Activated CD8-positive, alpha-beta memory T cell treated with anti-CD3 and anti-CD28 coated beads, Interleukin-2, amount 10 ng/mL, durations not matched to agents 7 days and 5 days (primary cell): ENCODE measurements at regions of chr5 and their contacts with region 1.

Region 1: DNA sequence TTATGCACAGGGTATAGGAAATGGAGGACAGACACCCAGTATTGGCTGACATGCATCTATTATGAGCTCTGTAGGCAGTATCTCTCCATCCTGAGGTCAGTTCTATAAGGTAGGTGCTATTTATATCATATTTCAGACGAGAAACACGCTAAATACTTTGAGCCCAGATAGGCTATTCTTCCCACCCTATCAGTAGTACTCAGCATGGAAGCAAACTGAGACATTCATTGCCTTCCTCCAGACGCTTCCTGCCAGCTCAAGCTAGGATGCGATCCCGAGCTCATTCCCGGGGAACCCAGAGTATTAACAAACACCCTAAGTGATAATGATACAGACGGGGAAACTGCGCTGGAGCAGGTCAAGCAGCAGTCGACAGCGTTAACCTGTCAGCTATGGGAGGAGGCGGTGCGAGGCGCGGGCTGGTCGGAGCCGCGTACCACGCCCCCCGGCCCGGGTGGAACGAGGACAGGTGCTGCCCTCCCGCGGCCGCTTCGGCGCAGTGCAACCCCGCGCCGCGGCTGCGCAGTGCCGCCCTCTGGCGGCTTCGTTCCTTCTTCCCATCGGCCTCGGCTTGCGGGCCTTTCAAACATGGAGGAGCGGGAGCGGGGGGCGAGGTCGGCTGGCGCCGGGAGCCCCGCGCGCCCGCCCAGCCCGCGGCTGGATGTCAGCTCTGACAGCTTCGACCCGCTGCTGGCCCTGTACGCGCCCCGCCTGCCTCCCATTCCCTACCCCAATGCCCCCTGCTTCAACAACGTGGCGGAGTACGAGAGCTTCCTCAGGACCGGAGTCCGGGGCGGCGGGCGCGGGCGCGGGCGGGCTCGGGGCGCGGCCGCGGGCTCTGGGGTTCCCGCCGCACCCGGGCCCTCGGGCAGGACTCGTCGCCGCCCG is at the start of gene LSM11:
- DNase-seq: peak; percentile 92
- ATAC-seq: peak; percentile 94
- H3K4me3 Mint-ChIP-seq: peak within 1 kb of the TSS; percentile 83
- H3K27ac Mint-ChIP-seq: peak within 1 kb of the TSS; percentile 83
- H3K4me1 Mint-ChIP-seq: peaks cover 36% of the 10 kb centered on the region
- H3K27me3 Mint-ChIP-seq: no peaks in the 10 kb centered on the region
- total RNA-seq, gene LSM11: 5.5 to 7.2 TPM

Region 2: DNA sequence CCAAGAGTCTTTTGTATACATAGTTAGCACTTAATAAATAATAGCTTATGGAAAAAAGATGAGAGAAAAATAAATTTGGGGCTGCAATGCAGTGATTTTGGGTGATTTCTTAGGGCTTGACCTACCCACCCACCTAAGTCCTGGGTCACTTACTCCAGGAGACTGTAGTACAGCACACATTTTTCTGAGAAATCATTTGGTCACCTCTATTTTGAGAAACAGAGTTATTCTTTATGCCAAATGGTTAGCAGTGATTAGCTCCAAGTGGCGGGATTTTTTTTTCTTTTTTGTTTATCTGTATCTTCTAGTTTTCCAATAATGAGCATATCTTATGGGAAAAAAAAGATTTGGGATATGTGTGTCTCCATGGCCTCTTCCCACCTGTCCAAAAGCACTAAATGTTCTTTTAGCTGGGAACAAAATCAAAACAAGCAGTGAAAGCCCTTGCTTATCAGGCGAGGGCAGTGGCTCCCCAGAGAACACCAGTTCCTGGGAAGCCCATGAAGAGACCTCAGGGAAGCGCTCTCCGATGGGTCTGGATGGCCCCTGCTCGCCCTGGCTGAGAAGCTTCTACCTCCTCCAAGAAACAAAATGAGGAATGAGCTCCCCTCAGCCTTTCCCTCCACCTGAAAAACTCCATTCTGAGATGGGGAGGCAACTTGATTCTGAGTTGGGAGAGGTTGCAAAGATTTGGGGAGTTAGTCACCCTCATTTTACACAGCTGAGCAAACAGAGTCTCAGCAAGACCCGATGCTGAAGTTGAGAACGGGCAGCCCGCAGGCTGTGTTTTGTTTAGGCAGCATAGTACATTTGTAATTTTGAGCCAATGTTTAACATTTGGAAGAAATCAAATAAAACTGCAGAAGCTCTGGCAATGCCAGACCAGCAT is 407.6 kb before region 1 on chr5:
- CTCF ChIA-PET with region 1: interaction called, 14 read pairs
- DNase-seq: no peak
- ATAC-seq: no peak
- H3K4me3 Mint-ChIP-seq: no peak overlapping the region
- H3K27ac Mint-ChIP-seq: no peak overlapping the region
- H3K4me1 Mint-ChIP-seq: peaks cover 4% of the 10 kb centered on the region
- H3K27me3 Mint-ChIP-seq: no peaks in the 10 kb centered on the region

Region 3: DNA sequence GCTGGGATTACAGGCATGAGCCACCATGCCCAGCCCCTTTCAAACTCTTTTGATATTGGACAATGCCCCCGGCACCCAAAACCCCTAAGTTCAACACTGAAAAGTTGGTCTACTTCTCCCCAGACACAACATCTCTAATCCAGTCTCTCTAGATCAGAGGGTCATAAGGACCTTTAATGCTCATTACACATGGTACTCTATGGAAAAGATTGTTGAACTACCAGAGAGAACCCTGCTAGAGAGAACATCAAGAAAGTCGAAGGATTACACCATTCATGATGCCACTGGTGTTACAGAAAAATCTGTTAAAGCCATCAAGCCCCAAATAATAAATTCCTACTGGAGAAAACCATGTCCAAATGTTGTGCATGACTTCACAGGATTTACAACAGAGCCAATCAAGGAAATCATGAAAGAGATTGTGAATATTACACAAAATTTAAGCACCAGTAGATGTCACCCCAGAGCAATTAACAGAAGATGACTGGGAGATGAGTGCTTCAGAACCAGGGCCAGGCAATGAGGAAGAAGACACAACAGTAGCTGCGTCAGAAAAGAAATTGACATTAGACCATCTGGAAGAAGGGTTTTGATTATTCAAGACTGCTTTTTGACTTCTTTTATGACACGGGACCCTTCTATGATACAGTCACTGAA is 311.7 kb before region 1 on chr5:
- CTCF ChIA-PET with region 1: interaction called, 78 read pairs
- DNase-seq: peak; percentile 51
- ATAC-seq: peak; percentile 97
- H3K4me3 Mint-ChIP-seq: no peak overlapping the region
- H3K27ac Mint-ChIP-seq: no peak overlapping the region
- H3K4me1 Mint-ChIP-seq: peaks cover 5% of the 10 kb centered on the region
- H3K27me3 Mint-ChIP-seq: peaks cover 20% of the 10 kb centered on the region

Region 4: GRCh38 chr5:157575381-157576020 is 167.9 kb before region 1 on chr5 and contains the start of gene ADAM19:
- CTCF ChIA-PET with region 1: interaction called, 18 read pairs
- DNase-seq: peak; percentile 74
- ATAC-seq: peak; percentile 77
- H3K4me3 Mint-ChIP-seq: peak within 1 kb of the TSS; percentile 99
- H3K27ac Mint-ChIP-seq: peak within 1 kb of the TSS; percentile 90
- H3K4me1 Mint-ChIP-seq: peaks cover 52% of the 10 kb centered on the region
- H3K27me3 Mint-ChIP-seq: no peaks in the 10 kb centered on the region
- total RNA-seq, gene ADAM19: 219 to 341 TPM

Region 5: DNA sequence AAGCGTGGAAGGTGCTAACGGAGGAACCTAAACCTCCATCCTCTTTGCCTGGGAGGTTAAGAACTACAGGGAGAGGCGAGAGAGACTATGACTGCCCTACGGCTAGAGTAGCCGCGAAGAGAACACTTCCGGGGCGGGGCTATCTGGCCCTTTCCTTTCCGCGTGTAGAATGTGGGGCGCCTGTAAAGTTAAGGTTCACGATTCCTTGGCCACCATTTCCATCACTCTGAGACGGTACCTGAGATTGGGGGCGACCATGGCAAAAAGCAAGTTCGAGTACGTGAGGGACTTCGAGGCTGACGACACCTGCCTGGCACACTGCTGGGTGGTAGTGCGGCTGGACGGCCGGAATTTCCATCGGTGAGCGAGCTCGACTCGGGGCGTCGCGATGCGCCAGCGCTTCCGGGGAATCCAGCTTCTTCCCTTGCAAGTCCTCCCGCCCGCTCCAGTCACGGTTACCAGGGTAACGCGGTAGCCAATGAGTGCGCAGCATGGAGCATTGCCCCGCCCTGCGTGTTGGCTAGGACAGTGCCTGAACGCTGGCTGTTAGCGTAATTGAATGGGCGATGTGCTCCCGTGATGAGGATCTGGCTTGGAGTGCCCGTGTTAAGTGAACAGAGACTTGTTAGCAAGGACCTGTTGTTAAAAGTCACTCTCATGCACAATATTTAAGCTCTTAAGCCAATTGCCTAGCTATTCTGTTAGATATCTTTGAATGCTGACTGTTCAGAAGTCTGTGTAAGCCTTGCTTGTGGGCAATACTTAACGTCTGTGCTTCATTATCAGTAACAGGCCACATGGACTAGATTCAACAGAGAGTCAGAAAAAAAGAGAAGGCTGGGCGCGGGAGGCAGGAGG is 11.9 kb before region 1 on chr5 and contains the start of gene THG1L:
- CTCF ChIA-PET with region 1: interaction called, 36 read pairs
- DNase-seq: peak; percentile 99
- ATAC-seq: peak; percentile 97
- H3K4me3 Mint-ChIP-seq: peak within 1 kb of the TSS; percentile 92
- H3K27ac Mint-ChIP-seq: peak within 1 kb of the TSS; percentile 95
- H3K4me1 Mint-ChIP-seq: peaks cover 20% of the 10 kb centered on the region
- H3K27me3 Mint-ChIP-seq: no peaks in the 10 kb centered on the region
- total RNA-seq, gene THG1L: 12.9 to 16.3 TPM